ENCODE measurements at regions of chr10 and their contacts with region 1.

Region 1: GRCh38 chr10:88791924-88792323 is 10.6 kb upstream of the LIPM start:
- DNase-seq: peak; percentile 52
- H3K4me3 Mint-ChIP-seq: no peak overlapping the region
- H3K27ac Mint-ChIP-seq: no peak overlapping the region
- H3K4me1 Mint-ChIP-seq: peaks cover 11% of the 10 kb centered on the region
- H3K27me3 Mint-ChIP-seq: no peaks in the 10 kb centered on the region
- CTCF ChIP-seq: peak; percentile 36

Region 2: DNA sequence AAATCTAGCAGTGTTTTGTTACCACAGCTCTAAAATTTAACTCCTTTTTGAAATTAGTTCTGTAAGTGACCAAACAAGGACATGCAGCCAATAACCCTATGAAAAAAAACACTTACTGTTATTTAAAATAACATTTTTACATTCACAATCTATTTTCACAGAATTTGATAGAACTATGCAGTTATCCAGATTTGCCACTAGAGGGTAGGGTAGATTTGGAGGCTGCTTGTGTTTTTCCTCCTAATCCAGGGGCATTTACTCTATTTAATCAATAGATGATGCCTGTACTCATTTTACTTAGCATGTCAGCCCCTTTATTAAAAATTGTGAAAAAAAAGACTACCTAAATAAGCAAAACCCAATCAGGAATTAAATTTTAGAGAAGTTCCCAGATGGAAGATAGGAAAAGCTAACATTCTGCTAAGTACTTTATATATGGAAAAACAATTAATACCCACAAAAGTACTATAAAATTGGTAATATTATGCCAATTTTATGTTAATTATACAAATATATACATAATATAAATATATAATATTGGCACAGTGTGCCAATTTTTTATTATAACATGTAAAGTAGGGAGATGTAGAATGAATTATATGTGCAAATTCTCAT is 104.0 kb before region 1 on chr10:
- CTCF ChIA-PET with region 1: interaction called, 4 read pairs
- POLR2A ChIA-PET with region 1: interaction called, 4 read pairs
- intact Hi-C with region 1: loop called (anchors 5 kb)
- DNase-seq: peak; percentile 40
- H3K4me3 Mint-ChIP-seq: no peak overlapping the region
- H3K27ac Mint-ChIP-seq: no peak overlapping the region
- H3K4me1 Mint-ChIP-seq: no peaks in the 10 kb centered on the region
- H3K27me3 Mint-ChIP-seq: no peaks in the 10 kb centered on the region
- CTCF ChIP-seq: peak; percentile 75

Region 3: GRCh38 chr10:88731296-88731695 is 60.6 kb before region 1 on chr10:
- CTCF ChIA-PET with region 1: interaction called, 4 read pairs
- POLR2A ChIA-PET with region 1: no interaction called
- intact Hi-C with region 1: loop called (anchors 10 kb)
- DNase-seq: peak; percentile 9
- H3K4me3 Mint-ChIP-seq: no peak overlapping the region
- H3K27ac Mint-ChIP-seq: no peak overlapping the region
- H3K4me1 Mint-ChIP-seq: no peaks in the 10 kb centered on the region
- H3K27me3 Mint-ChIP-seq: no peaks in the 10 kb centered on the region
- CTCF ChIP-seq: no peak

Measured in MCF 10A (cell line).